ENCODE measurements at regions of chr20 and their contacts with region 1.

Region 1: DNA sequence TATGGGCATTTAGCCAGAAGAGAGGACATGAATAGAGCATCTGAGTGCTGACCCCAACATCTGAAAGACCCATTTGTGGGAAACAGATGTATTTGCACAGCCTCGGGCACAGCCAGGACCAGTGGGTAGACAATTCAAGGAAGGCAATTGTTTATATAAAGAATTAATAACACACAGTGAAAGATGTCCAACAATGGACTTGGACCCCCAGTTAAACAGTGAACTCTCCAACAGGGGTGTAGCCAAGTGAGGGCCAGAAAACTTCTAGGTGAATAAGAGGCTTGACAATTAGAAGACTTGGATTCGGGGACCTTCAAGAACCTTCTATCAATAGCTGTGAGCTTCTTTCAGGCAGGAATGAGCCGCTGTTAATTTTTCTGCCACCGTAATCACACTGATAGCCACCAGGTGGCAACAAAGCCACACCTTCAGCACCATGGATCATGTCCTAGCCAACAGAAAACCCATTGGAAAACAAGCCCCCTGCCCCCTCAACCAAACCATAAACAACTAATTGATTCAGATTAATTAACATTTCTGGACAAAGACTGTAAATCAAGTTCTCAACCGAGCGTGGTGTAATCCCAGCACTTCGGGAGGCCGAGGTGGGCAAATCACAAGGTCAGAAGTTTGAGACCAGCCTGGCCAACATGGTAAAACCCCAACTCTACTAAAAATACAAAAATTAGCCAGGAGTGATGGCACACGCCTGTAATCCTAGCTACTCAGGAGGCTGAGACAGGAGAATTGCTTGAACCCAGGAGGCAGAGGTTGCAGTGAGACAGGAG is 8.8 kb upstream of the SRSF6 start:
- DNase-seq: no peak
- ATAC-seq: peak; percentile 38 to 44

Region 2: DNA sequence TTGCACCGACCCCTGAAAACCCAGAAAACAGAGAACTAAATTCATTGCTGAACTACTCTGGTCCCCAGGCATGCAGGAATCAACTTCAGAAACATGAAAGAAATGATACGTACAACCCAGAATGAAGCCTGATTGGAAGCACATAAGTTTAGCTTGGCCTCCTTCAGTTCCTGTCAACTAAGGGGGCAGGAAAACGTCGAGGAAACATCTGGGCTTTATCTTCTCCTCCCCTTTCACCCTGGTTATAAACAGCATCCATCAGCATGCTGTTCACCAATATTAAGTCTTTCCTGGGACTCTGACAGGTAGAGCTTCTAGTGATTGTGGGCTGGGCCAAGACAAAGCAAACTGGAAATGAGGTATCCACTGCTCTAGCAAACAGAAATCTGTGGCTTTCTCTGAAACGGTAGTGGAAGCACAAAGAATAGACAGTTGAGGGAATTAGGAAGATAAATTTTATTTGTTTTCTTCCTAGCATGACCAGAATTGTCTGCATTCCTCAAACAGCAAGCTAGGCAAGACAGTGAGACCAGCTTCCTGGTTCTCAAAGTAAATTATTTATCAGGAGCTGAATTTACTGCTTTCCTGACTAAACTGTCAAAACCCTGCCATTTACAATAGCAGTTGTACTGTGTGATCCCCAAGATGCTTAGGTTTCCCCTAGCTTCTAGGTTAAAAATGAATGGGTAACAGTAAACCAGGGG is 393.6 kb before region 1 on chr20:
- intact Hi-C with region 1: no loop called
- DNase-seq: no peak
- ATAC-seq: no peak

Region 3: GRCh38 chr20:43255861-43256260 is 193.1 kb before region 1 on chr20:
- intact Hi-C with region 1: no loop called
- DNase-seq: no peak
- ATAC-seq: no peak

Region 4: DNA sequence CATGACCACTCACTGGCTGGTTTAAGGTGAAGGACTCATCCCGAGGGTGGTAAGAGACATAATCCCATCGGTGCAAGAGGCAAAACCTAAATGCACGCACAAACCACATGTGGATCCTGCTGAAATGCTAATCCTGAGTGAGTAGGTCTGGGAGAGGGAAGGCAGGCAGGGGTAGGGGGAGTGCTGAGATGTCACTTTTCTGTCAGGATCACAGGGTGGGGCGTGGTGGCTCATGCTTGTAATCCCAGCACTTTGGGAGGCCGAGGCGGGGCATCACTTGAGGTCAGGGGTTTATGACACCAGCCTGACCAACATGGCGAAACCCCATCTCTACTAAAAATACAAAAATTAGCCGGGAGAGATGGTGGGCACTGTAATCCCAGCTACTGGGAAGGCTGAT is 88.9 kb before region 1 on chr20:
- intact Hi-C with region 1: no loop called
- DNase-seq: no peak
- ATAC-seq: no peak

Region 5: DNA sequence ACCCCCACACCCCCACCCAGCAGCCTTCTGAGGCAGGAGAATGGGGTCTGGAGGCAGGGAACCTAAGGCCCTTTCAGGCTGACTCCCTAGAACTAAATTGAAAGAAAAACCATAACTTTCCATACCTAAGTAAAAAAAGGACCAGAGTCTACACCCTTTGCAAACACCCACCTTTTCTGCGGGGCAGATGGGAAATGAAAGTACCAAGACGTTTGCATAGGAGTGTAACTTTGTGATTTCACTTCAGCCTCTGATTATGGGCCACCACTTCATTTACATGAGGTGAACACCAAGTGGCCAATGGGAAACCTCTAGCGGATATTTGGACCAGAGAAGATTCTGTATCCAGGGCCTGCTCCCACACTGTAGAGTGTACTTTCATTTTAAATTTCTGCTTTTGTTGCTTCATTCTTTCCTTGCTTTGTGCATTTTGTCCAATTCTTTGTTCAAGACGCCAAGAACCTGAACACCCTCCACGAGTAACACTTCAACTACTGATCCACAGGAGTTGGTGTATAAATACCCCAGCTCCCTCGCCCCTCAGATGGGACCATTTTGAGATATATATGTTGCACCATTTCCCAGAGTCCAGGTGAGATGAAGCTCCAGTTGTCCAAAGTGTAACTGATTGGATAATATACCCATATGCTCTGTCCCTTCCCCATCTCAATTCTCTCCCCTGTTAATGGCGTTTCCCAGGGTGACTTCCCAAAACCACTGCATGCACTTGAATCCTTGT is 10.2 kb before region 1 on chr20:
- intact Hi-C with region 1: no loop called
- DNase-seq: no peak
- ATAC-seq: no peak

Region 6: GRCh38 chr20:44080646-44081267 is 631.8 kb after region 1 on chr20:
- intact Hi-C with region 1: loop called in 1 of 2 experiments (anchors 5 kb)
- DNase-seq: peak; percentile 64
- ATAC-seq: peak; percentile 82 to 88

Measured in left cardiac atrium (tissue), 4 donors.